GM12878 (cell line): ENCODE measurements at regions of chr1 and their contacts with region 1.

Region 1: GRCh38 chr1:219660666-219661463 is 48.0 kb upstream of the ZC3H11B start:
- DNase-seq: peak; percentile 27
- ATAC-seq: peak; percentile 92
- H3K4me3 ChIP-seq: 0 out of 2 replicates have a peak overlapping the region, but pooled peaks have one; percentile 12
- H3K27ac ChIP-seq: no peak overlapping the region
- H3K4me1 ChIP-seq: peaks cover 16% of the 10 kb centered on the region
- H3K27me3 ChIP-seq: no peaks in the 10 kb centered on the region
- CTCF ChIP-seq: peak; percentile 84 to 88 (median 88)
- EP300 ChIP-seq: no peak
- POLR2A ChIP-seq: no peak
- RAD21 ChIP-seq: peak; percentile 89

Region 2: DNA sequence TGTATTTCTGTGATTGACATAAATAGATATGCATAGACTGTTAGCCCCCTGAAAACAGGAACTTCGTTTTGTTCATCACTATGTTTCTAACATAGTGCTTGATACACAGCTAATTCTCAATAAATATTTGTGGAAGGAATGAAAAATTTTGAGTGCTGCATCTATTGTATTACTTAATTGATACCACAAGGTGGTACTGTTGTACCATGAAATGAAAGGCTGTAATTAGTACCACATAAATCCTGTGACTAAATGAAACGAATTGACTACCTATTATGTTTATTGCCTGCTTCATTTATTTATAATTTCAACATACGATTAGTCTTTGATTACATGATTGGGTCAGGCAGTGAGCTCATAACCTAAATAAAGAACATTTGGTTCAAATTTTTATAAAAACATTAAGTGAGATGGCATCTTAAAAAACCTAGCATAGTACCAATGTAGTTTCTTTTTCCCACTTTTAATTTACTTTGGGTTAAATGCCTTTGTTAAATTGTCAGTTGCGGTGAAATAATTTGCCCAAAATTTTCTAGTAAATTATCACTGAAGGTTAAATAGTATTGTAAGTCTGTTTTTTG is 1330.7 kb before region 1 on chr1:
- CTCF ChIA-PET with region 1: interaction called, 3 read pairs
- POLR2A ChIA-PET with region 1: no interaction called
- RAD21 ChIA-PET with region 1: no interaction called
- SMC1A ChIA-PET with region 1: interaction called, 3 read pairs
- in situ Hi-C with region 1: no loop called
- intact Hi-C with region 1: loop called (anchors 2 kb)
- DNase-seq: no peak
- ATAC-seq: peak; percentile 76
- H3K4me3 ChIP-seq: no peak overlapping the region
- H3K27ac ChIP-seq: no peak overlapping the region
- H3K4me1 ChIP-seq: no peaks in the 10 kb centered on the region
- H3K27me3 ChIP-seq: no peaks in the 10 kb centered on the region
- CTCF ChIP-seq: peak; percentile 36 to 69 (median 39); a peak in 5 of 6 replicates
- EP300 ChIP-seq: no peak
- POLR2A ChIP-seq: no peak
- RAD21 ChIP-seq: peak; percentile 71

Region 3: DNA sequence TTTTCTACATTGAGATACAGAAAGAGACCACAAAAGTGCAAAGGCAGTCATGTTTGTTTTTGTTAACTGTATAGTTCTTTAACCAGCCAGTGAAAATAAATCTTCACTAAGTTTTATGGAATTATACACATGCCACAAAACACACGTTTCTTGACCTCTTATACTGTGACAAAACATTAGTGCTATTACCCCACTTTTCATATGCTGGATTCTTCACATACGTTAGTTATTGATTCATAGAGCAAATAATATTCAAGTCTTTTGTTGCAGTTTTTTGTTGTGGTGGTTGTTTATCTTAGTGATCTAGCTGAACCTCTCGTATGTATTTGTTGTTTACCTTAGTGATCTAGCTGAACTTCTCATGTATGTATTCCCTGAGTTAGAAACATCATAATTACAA is 459.2 kb before region 1 on chr1:
- CTCF ChIA-PET with region 1: no interaction called
- POLR2A ChIA-PET with region 1: no interaction called
- RAD21 ChIA-PET with region 1: interaction called, 4 read pairs
- SMC1A ChIA-PET with region 1: no interaction called
- in situ Hi-C with region 1: no loop called
- intact Hi-C with region 1: loop called (anchors 5 kb)
- DNase-seq: no peak
- ATAC-seq: no peak
- H3K4me3 ChIP-seq: no peak overlapping the region
- H3K27ac ChIP-seq: no peak overlapping the region
- H3K4me1 ChIP-seq: no peaks in the 10 kb centered on the region
- H3K27me3 ChIP-seq: no peaks in the 10 kb centered on the region
- CTCF ChIP-seq: no peak
- EP300 ChIP-seq: no peak
- POLR2A ChIP-seq: no peak
- RAD21 ChIP-seq: no peak

Region 4: DNA sequence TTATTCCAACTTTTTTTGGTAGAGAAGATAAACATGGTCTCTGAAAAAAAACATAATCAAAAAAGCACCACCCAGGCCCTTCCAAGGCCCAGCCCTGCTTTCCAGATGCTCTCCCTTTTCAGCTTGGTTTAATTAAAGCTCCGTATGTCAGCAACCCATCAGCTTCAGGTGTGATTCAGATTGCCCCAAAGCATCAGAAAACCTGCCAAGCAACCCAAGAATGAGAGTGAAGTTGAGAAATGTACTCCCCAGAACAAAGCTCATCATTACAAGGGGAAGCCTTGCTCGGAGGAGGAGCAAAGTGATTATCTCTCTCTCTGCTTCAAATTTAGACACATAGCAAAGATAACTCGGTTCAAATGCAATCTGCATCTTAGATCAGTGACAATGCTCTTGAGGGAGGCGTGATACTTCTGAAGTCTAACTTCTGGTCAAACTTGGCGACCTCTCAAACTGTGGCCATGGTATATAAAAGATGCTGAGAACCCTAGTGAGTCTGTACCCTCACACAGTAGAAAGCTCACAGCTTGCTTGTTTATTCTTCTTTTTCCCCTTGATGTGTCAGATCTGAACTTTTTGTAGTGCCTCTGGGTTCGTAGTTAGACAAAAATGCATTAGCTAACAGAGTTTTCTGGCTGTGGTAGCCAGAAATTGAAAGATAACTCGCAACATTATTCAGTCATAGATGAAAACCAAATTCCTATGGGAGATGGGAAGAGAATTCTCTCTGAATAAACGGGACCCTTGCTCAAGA is 15.3 kb after region 1 on chr1:
- CTCF ChIA-PET with region 1: interaction called, 10 read pairs
- POLR2A ChIA-PET with region 1: no interaction called
- RAD21 ChIA-PET with region 1: interaction called, 3 read pairs
- SMC1A ChIA-PET with region 1: interaction called, 3 read pairs
- in situ Hi-C with region 1: no loop called
- intact Hi-C with region 1: no loop called
- DNase-seq: no peak
- ATAC-seq: no peak
- H3K4me3 ChIP-seq: no peak overlapping the region
- H3K27ac ChIP-seq: no peak overlapping the region
- H3K4me1 ChIP-seq: no peaks in the 10 kb centered on the region
- H3K27me3 ChIP-seq: peaks cover 0 to 4% of the 10 kb centered on the region in 2 experiments; a peak in 2 of 4 replicates
- CTCF ChIP-seq: no peak
- EP300 ChIP-seq: no peak
- POLR2A ChIP-seq: no peak
- RAD21 ChIP-seq: no peak

Region 5: DNA sequence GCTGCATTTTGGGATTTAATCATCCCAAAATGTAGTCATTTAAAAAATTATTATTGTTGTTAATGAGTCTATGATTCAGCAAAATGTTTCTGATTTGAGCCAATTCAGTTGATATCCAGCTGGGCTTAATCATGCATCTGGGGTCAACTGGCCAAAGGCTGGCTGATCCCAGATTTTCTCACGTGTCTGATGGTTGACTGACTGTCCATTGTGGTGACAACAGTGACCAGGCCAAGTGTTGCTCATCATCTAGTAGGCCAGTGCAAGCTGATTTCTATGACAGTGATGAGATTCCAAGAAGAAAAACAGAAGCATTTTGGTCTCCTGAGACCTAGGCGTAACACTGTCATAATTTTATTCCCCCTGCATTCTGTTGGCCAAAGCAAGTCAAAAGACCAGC is 32.1 kb after region 1 on chr1:
- CTCF ChIA-PET with region 1: no interaction called
- POLR2A ChIA-PET with region 1: no interaction called
- RAD21 ChIA-PET with region 1: no interaction called
- SMC1A ChIA-PET with region 1: no interaction called
- in situ Hi-C with region 1: no loop called
- intact Hi-C with region 1: no loop called
- DNase-seq: no peak
- ATAC-seq: no peak
- H3K4me3 ChIP-seq: no peak overlapping the region
- H3K27ac ChIP-seq: no peak overlapping the region
- H3K4me1 ChIP-seq: no peaks in the 10 kb centered on the region
- H3K27me3 ChIP-seq: no peaks in the 10 kb centered on the region; a peak in 1 of 4 replicates
- CTCF ChIP-seq: no peak
- EP300 ChIP-seq: no peak
- POLR2A ChIP-seq: no peak
- RAD21 ChIP-seq: no peak